WTC11 (cell line): ENCODE measurements at regions of chr9 and their contacts with region 1.

Region 1: DNA sequence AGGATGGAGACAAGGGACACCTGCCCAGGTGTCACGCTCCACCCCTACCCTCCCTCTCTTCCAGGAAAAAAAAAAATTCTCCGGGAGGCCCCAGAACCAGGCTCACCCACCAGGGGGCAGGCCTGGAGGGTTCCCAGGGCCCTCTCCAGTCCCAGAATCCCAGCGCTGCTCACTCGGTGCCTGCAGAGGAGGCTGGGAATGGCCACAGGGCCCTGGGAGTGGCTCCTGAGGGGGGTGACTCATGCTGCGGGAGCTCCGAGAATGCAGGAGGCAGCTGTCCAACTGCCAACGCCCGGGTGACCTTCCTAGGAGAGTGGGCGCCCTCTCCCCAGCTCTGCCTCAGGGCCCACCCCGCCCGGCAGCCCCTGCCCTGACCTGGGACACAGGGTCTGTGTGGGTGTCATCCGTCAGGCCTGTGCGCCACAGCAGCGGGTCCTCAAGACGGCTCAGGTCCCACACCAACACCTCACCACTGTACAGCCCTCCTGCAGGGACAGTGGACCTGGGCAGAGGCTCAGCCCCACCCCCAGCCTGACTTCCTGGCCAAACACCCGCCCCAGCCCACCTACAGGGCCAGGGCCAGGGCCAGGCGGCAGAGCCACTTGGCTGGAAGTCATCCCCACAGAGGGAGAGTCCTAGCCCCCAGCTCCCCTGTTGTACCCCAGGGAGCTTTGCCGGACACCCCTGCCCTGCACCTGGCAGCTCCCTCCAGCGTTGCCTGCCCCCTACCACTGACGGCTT is 21.2 kb downstream of the DYNC2I2 start:
- DNase-seq: peak; percentile 84
- ATAC-seq: peak; percentile 79
- H3K4me3 Mint-ChIP-seq: no peak overlapping the region
- H3K27ac Mint-ChIP-seq: peak overlapping the region; percentile 15; the same call in 1 of the 2 replicates
- H3K4me1 Mint-ChIP-seq: peaks cover 3% of the 10 kb centered on the region; the same call in 1 of the 2 replicates
- H3K27me3 Mint-ChIP-seq: no peaks in the 10 kb centered on the region
- CTCF ChIP-seq: peak; percentile 53; the same call in 1 of the 2 replicates

Region 2: GRCh38 chr9:128615544-128615943 is 19.9 kb before region 1 on chr9:
- CTCF ChIA-PET with region 1: no interaction called
- POLR2A ChIA-PET with region 1: no interaction called
- DNase-seq: no peak
- ATAC-seq: no peak
- H3K4me3 Mint-ChIP-seq: no peak overlapping the region
- H3K27ac Mint-ChIP-seq: no peak overlapping the region
- H3K4me1 Mint-ChIP-seq: no peaks in the 10 kb centered on the region
- H3K27me3 Mint-ChIP-seq: no peaks in the 10 kb centered on the region
- CTCF ChIP-seq: no peak

Region 3: DNA sequence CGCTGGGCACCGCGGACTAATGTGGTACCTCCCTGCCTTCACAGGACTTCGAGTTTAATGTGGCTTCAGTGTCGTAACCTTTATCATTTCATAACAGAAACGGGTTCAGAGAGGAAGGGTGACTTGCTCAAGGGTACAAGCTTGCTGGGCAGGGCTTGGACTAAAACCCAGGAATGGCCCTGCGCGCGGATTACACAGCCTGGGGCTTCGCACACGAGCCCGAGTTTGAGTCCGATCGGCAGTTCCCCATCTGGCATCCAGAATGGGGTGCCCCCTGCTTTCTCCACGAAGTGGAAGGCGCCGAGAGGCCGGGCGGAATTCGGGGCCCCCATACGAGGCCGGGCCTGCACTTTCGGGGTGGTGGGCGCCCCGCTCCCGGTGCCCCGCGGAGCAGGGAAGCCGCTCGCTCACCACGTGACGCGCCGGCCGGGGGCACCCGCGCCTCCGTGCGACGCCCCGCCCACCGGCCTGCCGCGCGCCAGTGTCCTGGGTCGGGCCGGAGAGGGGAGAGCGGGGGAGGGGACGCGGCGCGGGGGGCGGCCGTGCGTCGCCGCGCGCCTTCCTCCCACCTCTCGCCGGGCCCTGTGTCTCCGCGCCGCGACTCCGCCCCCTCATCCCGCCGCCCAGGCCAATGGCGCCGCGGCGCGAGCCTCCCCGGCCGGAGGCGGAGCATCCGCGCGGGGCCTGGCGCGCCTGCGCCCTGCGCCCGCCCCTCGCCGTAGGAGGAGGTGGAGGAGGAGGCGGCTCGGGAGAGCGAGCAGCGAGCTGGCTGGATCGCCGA is 53.2 kb after region 1 on chr9 and contains the start of gene SET:
- CTCF ChIA-PET with region 1: interaction called, 19 read pairs
- POLR2A ChIA-PET with region 1: interaction called, 3 read pairs
- DNase-seq: peak; percentile 93
- ATAC-seq: peak; percentile 84
- H3K4me3 Mint-ChIP-seq: peak within 1 kb of the TSS; percentile 96
- H3K27ac Mint-ChIP-seq: peak within 1 kb of the TSS; percentile 98
- H3K4me1 Mint-ChIP-seq: peaks cover 57% of the 10 kb centered on the region
- H3K27me3 Mint-ChIP-seq: no peaks in the 10 kb centered on the region; the same call in 1 of the 2 replicates
- CTCF ChIP-seq: no peak
- total RNA-seq, gene SET: 1,083 to 1,129 TPM (median 1,086 TPM) in 3 replicates

Region 4: DNA sequence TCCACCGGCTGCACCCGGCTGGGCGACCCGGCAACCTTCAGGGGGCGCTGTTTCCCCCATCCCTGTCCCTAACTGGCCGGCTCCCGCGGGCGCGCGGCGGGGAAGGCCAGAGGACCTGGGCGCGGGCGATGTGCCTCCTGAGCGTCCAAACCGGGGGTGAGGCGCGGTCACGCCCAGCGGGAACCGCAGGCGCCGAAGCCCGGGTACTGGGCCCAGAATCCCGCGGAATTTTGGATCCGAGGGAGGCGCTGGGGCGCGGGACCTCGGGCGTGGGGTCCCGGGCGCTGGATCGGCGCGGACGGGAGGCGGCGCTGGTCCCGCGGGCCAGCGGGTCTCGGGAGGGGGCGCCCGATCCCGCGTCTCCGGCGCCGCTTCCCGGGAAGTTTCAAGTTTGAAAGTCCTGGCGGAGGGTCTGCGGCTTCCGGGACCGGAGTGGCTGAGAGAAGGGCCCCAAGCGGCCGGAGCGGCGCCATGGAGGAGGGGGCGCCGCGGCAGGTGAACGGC is 67.0 kb after region 1 on chr9 and contains the start of gene PKN3:
- CTCF ChIA-PET with region 1: interaction called, 11 read pairs
- POLR2A ChIA-PET with region 1: interaction called, 5 read pairs
- DNase-seq: peak; percentile 97
- ATAC-seq: peak; percentile 81
- H3K4me3 Mint-ChIP-seq: peak within 1 kb of the TSS; percentile 83
- H3K27ac Mint-ChIP-seq: peak within 1 kb of the TSS; percentile 89
- H3K4me1 Mint-ChIP-seq: peaks cover 4% of the 10 kb centered on the region; the same call in 1 of the 2 replicates
- H3K27me3 Mint-ChIP-seq: no peaks in the 10 kb centered on the region
- CTCF ChIP-seq: peak; percentile 96
- total RNA-seq, gene PKN3: 24.1 to 28.9 TPM (median 27.5 TPM) in 3 replicates

Region 5: DNA sequence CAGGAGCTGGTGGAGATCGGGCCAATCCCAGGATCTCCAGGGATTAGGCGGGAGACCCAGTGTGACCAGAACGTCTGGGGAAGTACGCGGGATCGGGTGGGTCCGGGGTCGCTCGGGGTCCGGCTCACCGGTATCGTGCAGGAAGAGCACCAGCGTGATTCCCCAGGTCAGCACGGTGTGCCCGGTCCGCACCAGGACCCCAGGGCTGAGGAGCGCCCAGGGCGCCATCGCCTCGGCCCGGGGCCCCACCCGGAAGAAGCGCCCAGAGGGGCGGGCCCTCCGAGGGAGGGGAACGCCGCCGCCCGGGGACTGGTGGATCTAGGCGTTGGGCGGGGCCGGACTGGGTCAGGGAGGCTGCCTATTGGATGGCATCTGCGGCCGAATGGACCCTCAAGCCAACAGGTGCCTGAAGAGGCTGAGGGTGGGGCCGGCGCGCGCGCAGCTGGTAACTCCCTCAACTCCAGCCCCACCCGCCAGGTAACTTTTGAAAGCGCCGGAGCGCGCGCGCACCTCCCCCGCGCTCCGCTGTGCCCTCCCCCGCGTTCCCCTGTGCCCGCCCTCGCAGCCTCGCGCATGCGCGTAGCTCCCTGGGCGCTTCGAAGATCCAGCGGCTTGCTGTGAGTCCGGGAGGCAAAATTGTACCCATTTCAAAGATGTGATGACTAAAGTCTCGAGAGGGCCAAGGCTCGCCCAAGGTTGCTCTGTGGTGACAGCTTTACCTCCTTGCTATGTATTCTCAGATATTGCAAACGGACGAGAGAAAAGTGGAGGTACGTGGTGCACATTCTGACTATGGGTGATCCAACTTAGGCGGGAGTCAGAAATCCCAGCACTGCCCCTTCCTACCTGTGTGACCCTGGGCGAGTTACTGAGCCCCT is 88.7 kb after region 1 on chr9 and contains the start of gene ZDHHC12:
- CTCF ChIA-PET with region 1: interaction called, 16 read pairs
- POLR2A ChIA-PET with region 1: no interaction called
- DNase-seq: peak; percentile 99
- ATAC-seq: peak; percentile 93
- H3K4me3 Mint-ChIP-seq: peak within 1 kb of the TSS; percentile 96
- H3K27ac Mint-ChIP-seq: peak within 1 kb of the TSS; percentile 97
- H3K4me1 Mint-ChIP-seq: peaks cover 15% of the 10 kb centered on the region
- H3K27me3 Mint-ChIP-seq: no peaks in the 10 kb centered on the region
- CTCF ChIP-seq: no peak
- total RNA-seq, gene ZDHHC12: 39.7 to 46.3 TPM (median 45.2 TPM) in 3 replicates

Region 6: DNA sequence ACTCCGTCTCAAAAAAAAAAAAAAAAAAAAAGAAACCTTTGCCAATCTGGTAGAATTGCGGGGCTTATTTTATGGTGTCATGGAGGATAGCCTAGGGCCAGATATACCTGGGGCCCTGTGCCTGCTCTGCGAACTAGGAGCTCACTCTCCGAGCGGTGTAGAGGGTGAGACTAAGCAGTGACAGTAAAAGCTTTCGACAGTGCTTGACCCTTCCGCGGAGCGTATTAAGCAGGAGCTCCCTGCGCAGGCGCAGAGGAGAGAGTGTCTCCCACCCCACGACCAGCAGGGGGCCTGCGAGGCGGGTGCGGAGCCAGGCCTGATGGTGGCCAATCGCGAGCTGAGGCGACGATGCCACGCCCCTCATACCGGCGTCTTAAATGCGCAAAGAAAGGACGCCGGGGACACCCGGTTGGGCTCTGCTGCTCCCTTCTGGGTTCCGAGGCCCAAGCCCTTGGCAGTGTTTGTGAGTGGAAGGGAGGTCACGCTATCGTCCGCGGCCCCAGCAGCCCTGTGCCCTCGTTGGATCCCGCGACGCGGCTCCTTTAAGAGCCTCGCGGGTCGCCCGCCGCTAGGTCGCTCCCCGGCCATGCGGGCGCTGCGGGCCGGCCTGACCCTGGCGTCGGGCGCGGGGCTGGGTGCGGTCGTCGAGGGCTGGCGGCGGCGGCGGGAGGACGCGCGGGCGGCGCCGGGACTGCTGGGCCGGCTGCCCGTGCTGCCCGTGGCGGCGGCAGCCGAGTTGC is 182.8 kb after region 1 on chr9 and contains the start of gene ENDOG:
- CTCF ChIA-PET with region 1: interaction called, 14 read pairs
- POLR2A ChIA-PET with region 1: no interaction called
- DNase-seq: peak; percentile 99
- ATAC-seq: peak; percentile 86
- H3K4me3 Mint-ChIP-seq: peak within 1 kb of the TSS; percentile 71
- H3K27ac Mint-ChIP-seq: peak within 1 kb of the TSS; percentile 80; the same call in 1 of the 2 replicates
- H3K4me1 Mint-ChIP-seq: peaks cover 3% of the 10 kb centered on the region
- H3K27me3 Mint-ChIP-seq: no peaks in the 10 kb centered on the region
- CTCF ChIP-seq: peak; percentile 53; the same call in 1 of the 2 replicates
- total RNA-seq, gene ENDOG: 25.8 to 28.7 TPM (median 25.8 TPM) in 3 replicates

Region 7: GRCh38 chr9:128835246-128836210 is 200.1 kb after region 1 on chr9:
- CTCF ChIA-PET with region 1: no interaction called
- POLR2A ChIA-PET with region 1: no interaction called
- DNase-seq: no peak
- ATAC-seq: no peak
- H3K4me3 Mint-ChIP-seq: no peak overlapping the region
- H3K27ac Mint-ChIP-seq: no peak overlapping the region
- H3K4me1 Mint-ChIP-seq: no peaks in the 10 kb centered on the region
- H3K27me3 Mint-ChIP-seq: no peaks in the 10 kb centered on the region
- CTCF ChIP-seq: no peak